CD4-positive, alpha-beta T cell (primary cell): ENCODE measurements at regions of chr2 and their contacts with region 1.

Region 1: GRCh38 chr2:23452853-23453420 is 68.0 kb downstream of the KLHL29 start:
- DNase-seq: peak in 11 of 14 experiments; percentile 7 to 75 (median 27)
- ATAC-seq: peak; percentile 86
- H3K4me3 ChIP-seq: no peak overlapping the region
- H3K4me3 Mint-ChIP-seq: peak overlapping the region; percentile 57
- H3K27ac ChIP-seq: no peak overlapping the region
- H3K27ac Mint-ChIP-seq: peak overlapping the region; percentile 76
- H3K4me1 ChIP-seq: peaks cover 12% of the 10 kb centered on the region
- H3K4me1 Mint-ChIP-seq: peaks cover 35% of the 10 kb centered on the region
- H3K27me3 ChIP-seq: peaks cover 0 to 10% of the 10 kb centered on the region in 2 experiments
- H3K27me3 Mint-ChIP-seq: peaks cover 14% of the 10 kb centered on the region
- CTCF ChIP-seq: no peak

Region 2: GRCh38 chr2:23384551-23385349 is 68.2 kb before region 1 on chr2 and contains the start of gene KLHL29:
- CTCF ChIA-PET with region 1: no interaction called
- POLR2A ChIA-PET with region 1: no interaction called
- intact Hi-C with region 1: loop called in 1 of 2 experiments (anchors 5 kb)
- DNase-seq: peak; percentile 49 to 84 (median 74)
- ATAC-seq: peak; percentile 74
- H3K4me3 ChIP-seq: peak within 1 kb of the TSS; percentile 51
- H3K4me3 Mint-ChIP-seq: peak within 1 kb of the TSS; percentile 88
- H3K27ac ChIP-seq: no peak within 1 kb of the TSS
- H3K27ac Mint-ChIP-seq: peak within 1 kb of the TSS; percentile 12
- H3K4me1 ChIP-seq: peaks cover 28% of the 10 kb centered on the region
- H3K4me1 Mint-ChIP-seq: peaks cover 33% of the 10 kb centered on the region
- H3K27me3 ChIP-seq: peaks cover 15 to 33% of the 10 kb centered on the region in 2 experiments
- H3K27me3 Mint-ChIP-seq: peaks cover 54% of the 10 kb centered on the region
- CTCF ChIP-seq: no peak
- total RNA-seq, gene KLHL29: 2.5 to 2.7 TPM

Region 3: DNA sequence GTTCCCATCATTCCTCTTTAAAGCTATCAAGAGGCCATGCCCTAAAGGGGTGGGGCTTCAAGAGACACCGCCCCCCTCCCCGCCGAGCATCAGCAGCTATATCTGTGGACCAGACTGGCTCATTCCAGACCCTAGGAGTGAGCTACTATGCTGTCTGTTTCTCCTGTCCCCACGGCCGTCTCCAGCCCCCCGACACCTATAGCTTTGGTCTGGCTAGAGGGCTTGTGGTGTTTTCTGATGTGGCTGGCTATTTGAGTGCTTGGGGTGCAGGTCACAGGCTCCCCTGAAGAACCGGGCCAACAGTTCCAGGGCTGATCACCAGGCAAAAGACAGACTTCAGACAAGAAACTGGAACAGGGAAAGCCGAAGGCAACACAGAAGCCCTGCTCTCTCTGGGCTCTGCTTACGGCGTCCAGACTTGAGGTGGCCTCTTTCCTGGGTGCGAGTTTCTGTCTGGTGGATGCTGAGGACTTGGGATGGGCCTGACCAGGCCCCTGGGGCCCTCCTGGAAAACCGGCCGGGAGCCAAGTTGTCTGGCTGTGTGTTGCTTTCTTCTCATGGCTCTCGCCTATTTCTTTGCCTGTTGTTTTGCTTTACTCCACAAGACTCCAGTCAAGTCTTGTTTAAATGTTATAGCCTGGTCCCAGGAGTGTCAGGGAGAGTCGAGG is 15.7 kb after region 1 on chr2:
- CTCF ChIA-PET with region 1: no interaction called
- POLR2A ChIA-PET with region 1: no interaction called
- intact Hi-C with region 1: no loop called
- DNase-seq: no peak
- ATAC-seq: no peak
- H3K4me3 ChIP-seq: no peak overlapping the region
- H3K4me3 Mint-ChIP-seq: no peak overlapping the region
- H3K27ac ChIP-seq: no peak overlapping the region
- H3K27ac Mint-ChIP-seq: no peak overlapping the region
- H3K4me1 ChIP-seq: no peaks in the 10 kb centered on the region
- H3K4me1 Mint-ChIP-seq: no peaks in the 10 kb centered on the region
- H3K27me3 ChIP-seq: peaks cover 4 to 20% of the 10 kb centered on the region in 2 experiments
- H3K27me3 Mint-ChIP-seq: peaks cover 62% of the 10 kb centered on the region
- CTCF ChIP-seq: no peak

Region 4: DNA sequence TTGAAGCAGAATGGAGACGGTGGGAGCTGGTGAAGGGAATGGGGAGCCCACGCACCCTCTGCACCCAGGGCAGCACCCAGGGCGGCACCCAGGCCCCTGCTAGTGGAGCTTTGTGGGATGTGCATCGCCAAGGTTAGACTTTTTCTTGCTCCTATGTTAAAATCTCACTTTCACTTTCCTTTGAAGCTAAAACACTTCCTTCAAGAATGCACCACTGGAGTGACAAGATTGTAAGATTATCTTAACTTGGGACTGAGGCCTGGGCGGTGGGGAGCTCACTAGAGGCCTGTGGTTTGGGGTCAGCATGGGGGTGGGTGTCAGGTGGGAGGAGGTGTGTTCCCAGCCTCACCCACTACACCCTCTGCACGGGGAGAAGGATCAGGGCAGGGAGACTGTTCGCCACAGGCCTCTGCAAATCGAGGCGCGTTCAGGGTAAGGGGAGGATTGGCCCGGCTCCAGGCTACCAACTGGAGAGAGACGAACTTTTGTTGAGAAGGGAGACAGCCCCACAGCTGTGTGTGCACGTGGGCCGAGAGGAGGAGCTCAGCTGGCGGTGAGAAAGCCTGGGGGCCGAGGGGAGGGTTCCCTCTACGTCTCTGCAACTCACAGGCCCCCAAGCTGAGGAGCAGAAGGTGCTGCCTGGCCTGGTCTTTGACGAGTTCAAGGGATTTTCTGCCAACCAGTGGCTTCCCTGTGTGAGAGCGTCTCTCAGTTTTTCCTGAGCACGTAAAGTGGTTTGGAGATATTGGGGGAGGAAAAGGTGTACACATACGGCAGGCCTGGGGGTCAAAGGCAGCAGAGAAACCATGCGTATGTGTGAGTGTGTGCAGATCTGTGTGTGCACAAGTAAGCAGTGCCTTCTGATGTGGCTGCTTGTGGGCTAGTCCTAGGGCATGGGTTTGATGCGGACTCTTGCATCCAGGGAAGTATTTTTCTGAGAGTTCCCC is 79.7 kb after region 1 on chr2:
- CTCF ChIA-PET with region 1: no interaction called
- POLR2A ChIA-PET with region 1: no interaction called
- intact Hi-C with region 1: loop called in 1 of 2 experiments (anchors 2 kb)
- DNase-seq: peak; percentile 19 to 60 (median 38)
- ATAC-seq: peak; percentile 79
- H3K4me3 ChIP-seq: peak overlapping the region; percentile 53
- H3K4me3 Mint-ChIP-seq: peak overlapping the region; percentile 92
- H3K27ac ChIP-seq: peak overlapping the region; percentile 44 to 58
- H3K27ac Mint-ChIP-seq: peak overlapping the region; percentile 94
- H3K4me1 ChIP-seq: peaks cover 40% of the 10 kb centered on the region
- H3K4me1 Mint-ChIP-seq: peaks cover 40% of the 10 kb centered on the region
- H3K27me3 ChIP-seq: no peaks in the 10 kb centered on the region
- H3K27me3 Mint-ChIP-seq: no peaks in the 10 kb centered on the region
- CTCF ChIP-seq: no peak